Common myeloid progenitor, CD34-positive (primary cell): ENCODE measurements at regions of chr18 and their contacts with region 1.

Region 1: GRCh38 chr18:49858309-49859020 is 45.1 kb upstream of the ACAA2 start:
- DNase-seq: peak; percentile 46 to 67 (median 52)
- H3K4me3 ChIP-seq: no peak overlapping the region
- H3K27ac ChIP-seq: no peak overlapping the region
- H3K4me1 ChIP-seq: no peaks in the 10 kb centered on the region
- H3K27me3 ChIP-seq: peaks cover 0 to 10% (median 0%) of the 10 kb centered on the region in 5 experiments

Region 2: DNA sequence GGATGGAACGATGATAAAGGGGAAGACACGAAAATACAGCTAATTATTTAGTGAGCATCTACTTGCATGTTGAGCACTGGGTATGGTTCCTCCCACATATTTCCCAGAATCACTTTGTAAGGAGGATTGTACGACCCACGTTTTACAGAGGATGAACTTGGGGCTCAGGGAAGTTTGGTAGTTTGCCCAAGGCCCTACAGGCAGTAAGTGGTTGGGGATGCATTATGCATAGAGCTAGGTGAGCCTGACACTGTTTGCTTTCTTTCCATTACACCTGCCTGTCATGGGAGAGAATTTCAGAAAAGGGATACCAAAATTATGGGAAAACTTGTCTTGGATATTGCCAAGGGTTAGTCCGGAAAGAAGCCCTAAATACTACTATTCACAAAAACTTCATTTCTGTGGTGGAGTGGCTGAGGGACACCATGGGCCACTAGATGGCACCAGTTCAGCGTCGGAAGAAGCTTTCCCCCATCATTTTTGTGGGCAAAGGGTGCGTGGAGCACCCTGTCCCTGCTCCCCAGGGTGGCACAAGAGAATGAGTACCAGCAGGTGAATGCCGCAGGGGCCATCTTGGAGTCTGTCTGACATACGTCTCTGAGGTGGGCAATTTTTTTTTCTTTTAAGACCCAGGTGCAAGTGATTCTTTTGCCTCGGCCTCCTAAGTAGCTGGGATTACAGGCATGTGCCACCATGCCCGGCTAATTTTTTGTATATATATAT is 347.9 kb before region 1 on chr18:
- CTCF ChIA-PET with region 1: interaction called, 35 read pairs
- POLR2A ChIA-PET with region 1: no interaction called
- DNase-seq: peak; percentile 59 to 68 (median 61)
- H3K4me3 ChIP-seq: no peak overlapping the region
- H3K27ac ChIP-seq: no peak overlapping the region
- H3K4me1 ChIP-seq: peaks cover 0 to 2% (median 0%) of the 10 kb centered on the region in 4 experiments
- H3K27me3 ChIP-seq: peaks cover 0 to 4% (median 2%) of the 10 kb centered on the region in 5 experiments

Region 3: GRCh38 chr18:49561289-49562193 is 296.9 kb before region 1 on chr18 and contains the start of gene LIPG:
- CTCF ChIA-PET with region 1: interaction called, 42 read pairs
- POLR2A ChIA-PET with region 1: no interaction called
- DNase-seq: peak; percentile 53 to 83 (median 77)
- H3K4me3 ChIP-seq: peak within 1 kb of the TSS in 4 of 7 experiments; percentile 25 to 61 (median 54)
- H3K27ac ChIP-seq: no peak within 1 kb of the TSS
- H3K4me1 ChIP-seq: peaks cover 0 to 20% (median 14%) of the 10 kb centered on the region in 4 experiments
- H3K27me3 ChIP-seq: peaks cover 16 to 78% (median 36%) of the 10 kb centered on the region in 5 experiments

Region 4: GRCh38 chr18:49997558-49997957 is 139.1 kb after region 1 on chr18:
- CTCF ChIA-PET with region 1: no interaction called
- POLR2A ChIA-PET with region 1: no interaction called
- DNase-seq: no peak
- H3K4me3 ChIP-seq: no peak overlapping the region
- H3K27ac ChIP-seq: no peak overlapping the region
- H3K4me1 ChIP-seq: no peaks in the 10 kb centered on the region
- H3K27me3 ChIP-seq: peaks cover 0 to 7% (median 0%) of the 10 kb centered on the region in 5 experiments